Activated CD4-positive, alpha-beta memory T cell treated with anti-CD3 and anti-CD28 coated beads for 36 hours (primary cell): ENCODE measurements at regions of chr9 and their contacts with region 1.

Region 1: GRCh38 chr9:126471084-126471624 is 142.6 kb upstream of the LMX1B start:
- DNase-seq: peak; percentile 92
- H3K4me3 Mint-ChIP-seq: peak overlapping the region; percentile 51
- H3K27ac Mint-ChIP-seq: peak overlapping the region; percentile 49
- H3K4me1 Mint-ChIP-seq: peaks cover 48% of the 10 kb centered on the region
- H3K27me3 Mint-ChIP-seq: peaks cover 7% of the 10 kb centered on the region

Region 2: DNA sequence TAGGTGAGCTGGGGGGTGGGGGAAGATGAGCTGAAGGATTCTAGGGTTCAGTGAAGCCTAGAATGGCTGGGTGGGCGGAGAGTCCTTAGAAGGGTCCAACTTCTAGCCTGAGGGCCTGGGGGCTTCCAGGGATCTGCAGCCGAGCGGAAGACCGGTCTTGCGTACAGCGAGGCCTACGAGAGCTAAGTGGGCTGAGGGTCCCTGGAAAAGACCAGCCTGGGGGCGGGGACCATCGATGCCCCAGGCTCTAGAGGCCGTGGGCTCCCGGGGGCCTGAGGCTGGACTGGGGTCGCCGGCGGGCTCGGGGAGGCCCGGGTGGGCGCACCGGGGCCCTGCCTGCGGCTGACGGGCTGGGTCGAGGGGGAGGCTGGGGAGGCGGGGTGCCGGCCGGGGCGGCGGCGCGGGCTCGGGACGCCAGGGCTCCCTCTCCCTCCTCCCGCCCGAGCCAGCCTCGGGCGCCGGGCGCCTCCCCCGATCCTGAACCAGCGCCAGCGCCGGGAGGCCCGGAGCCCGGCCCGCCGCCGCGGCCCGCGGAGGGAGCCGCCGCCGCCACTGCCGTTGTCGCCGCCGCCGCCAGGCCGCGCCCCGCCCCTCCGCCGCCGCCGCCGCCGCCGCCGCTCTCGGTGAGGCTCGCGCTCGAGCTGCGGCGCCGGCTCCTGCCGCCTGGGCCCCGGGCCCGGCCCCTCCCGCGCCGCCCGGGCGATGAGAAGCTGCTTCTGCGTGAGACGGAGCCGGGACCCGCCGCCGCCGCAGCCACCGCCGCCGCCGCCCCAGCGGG is 144.7 kb before region 1 on chr9 and contains the start of gene MVB12B:
- CTCF ChIA-PET with region 1: no interaction called
- POLR2A ChIA-PET with region 1: no interaction called
- intact Hi-C with region 1: loop called (anchors 10 kb)
- DNase-seq: peak; percentile 45
- H3K4me3 Mint-ChIP-seq: peak within 1 kb of the TSS; percentile 60
- H3K27ac Mint-ChIP-seq: no peak within 1 kb of the TSS
- H3K4me1 Mint-ChIP-seq: peaks cover 16% of the 10 kb centered on the region
- H3K27me3 Mint-ChIP-seq: peaks cover 3% of the 10 kb centered on the region
- total RNA-seq, gene MVB12B: 1.1 to 1.4 TPM

Region 3: GRCh38 chr9:126411225-126411947 is 59.8 kb before region 1 on chr9:
- CTCF ChIA-PET with region 1: no interaction called
- POLR2A ChIA-PET with region 1: no interaction called
- intact Hi-C with region 1: loop called (anchors 1 kb)
- DNase-seq: peak; percentile 56
- H3K4me3 Mint-ChIP-seq: peak overlapping the region; percentile 42
- H3K27ac Mint-ChIP-seq: peak overlapping the region; percentile 61
- H3K4me1 Mint-ChIP-seq: peaks cover 27% of the 10 kb centered on the region
- H3K27me3 Mint-ChIP-seq: no peaks in the 10 kb centered on the region

Region 4: DNA sequence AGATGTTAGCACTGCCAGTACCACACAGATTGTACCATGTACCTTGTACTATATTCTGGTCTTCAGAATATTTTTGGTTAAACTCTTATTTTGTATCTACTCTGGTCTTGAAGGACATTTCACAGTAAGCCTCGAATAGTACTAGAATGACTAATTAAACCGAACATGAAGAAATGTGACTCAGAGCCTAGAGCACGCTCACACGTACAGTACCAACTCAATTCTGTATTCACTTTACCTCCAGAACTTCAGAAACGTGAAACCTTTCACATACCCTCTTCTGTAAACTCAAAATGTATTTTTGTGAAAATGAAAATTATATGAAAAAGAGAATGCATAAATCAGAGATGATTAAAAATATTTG is 31.8 kb before region 1 on chr9:
- CTCF ChIA-PET with region 1: no interaction called
- POLR2A ChIA-PET with region 1: no interaction called
- intact Hi-C with region 1: loop called (anchors 2 kb)
- DNase-seq: no peak
- H3K4me3 Mint-ChIP-seq: no peak overlapping the region
- H3K27ac Mint-ChIP-seq: no peak overlapping the region
- H3K4me1 Mint-ChIP-seq: peaks cover 6% of the 10 kb centered on the region
- H3K27me3 Mint-ChIP-seq: no peaks in the 10 kb centered on the region